Esophagus muscularis mucosa (tissue), 4 donors: ENCODE measurements at regions of chr9 and their contacts with region 1.

Region 1: GRCh38 chr9:70258692-70259511 is at the start of gene SMC5:
- DNase-seq: peak; percentile 97
- H3K4me3 ChIP-seq: peak within 1 kb of the TSS; percentile 72 to 83 (median 80)
- H3K27ac ChIP-seq: peak within 1 kb of the TSS; percentile 92 to 94 (median 92)
- H3K4me1 ChIP-seq: peaks cover 42 to 71% (median 66%) of the 10 kb centered on the region in 4 donors
- H3K27me3 ChIP-seq: no peaks in the 10 kb centered on the region
- CTCF ChIP-seq: no peak
- EP300 ChIP-seq: no peak
- POLR2A ChIP-seq: peak; percentile 96
- total RNA-seq, gene SMC5: 17.2 to 27.4 (median 17.8) TPM

Region 2: DNA sequence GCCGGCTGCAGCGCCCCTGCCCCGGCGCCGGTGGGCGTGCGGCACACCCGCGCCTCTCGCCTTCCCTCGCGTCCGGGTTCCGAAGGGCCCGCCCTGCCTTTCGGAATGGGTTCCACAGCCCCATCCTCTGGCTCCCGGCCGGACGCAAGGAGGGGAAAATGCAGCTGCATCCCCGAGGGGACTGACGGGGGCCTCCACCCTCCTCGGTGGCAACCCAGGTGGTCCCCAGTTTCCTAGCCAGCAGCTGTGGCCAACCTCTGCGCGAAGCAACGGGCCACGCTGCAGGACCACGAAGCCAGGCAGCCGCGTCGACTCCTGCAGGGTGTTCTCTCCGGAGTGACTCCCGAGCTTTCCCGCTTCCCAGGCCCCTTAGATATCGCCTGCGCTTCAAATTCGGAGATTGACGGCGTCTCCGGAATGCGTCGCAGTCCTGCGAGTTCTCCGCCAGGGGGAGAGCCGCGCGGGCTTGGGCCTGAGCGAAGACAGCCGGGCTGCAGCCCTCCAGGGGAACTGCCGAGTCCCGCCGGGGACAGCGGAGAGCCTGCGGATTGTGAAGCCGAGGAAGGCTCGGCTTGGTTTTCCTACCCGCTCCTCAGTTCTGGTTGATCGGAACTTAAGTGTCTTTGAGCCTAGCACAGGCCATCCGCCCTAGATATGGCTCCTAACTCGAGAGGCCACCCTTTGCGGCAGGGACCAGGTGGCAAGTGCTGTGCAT is 586.1 kb before region 1 on chr9:
- intact Hi-C with region 1: loop called (anchors 10 kb)
- DNase-seq: no peak
- H3K4me3 ChIP-seq: peak overlapping the region; percentile 81 to 94 (median 87)
- H3K27ac ChIP-seq: peak overlapping the region; percentile 75 to 83 (median 82)
- H3K4me1 ChIP-seq: peaks cover 15 to 24% (median 23%) of the 10 kb centered on the region in 4 donors
- H3K27me3 ChIP-seq: peaks cover 0 to 3% (median 0%) of the 10 kb centered on the region in 4 donors
- CTCF ChIP-seq: peak; percentile 71 to 91 (median 88)
- EP300 ChIP-seq: no peak
- POLR2A ChIP-seq: no peak

Region 3: GRCh38 chr9:69981686-69982450 is 277.0 kb before region 1 on chr9:
- intact Hi-C with region 1: loop called (anchors 10 kb)
- DNase-seq: no peak
- H3K4me3 ChIP-seq: no peak overlapping the region
- H3K27ac ChIP-seq: no peak overlapping the region
- H3K4me1 ChIP-seq: no peaks in the 10 kb centered on the region
- H3K27me3 ChIP-seq: no peaks in the 10 kb centered on the region
- CTCF ChIP-seq: no peak
- EP300 ChIP-seq: no peak
- POLR2A ChIP-seq: no peak

Region 4: GRCh38 chr9:70318002-70318401 is 59.1 kb after region 1 on chr9:
- intact Hi-C with region 1: loop called (anchors 10 kb)
- DNase-seq: no peak
- H3K4me3 ChIP-seq: no peak overlapping the region
- H3K27ac ChIP-seq: no peak overlapping the region
- H3K4me1 ChIP-seq: no peaks in the 10 kb centered on the region
- H3K27me3 ChIP-seq: no peaks in the 10 kb centered on the region
- CTCF ChIP-seq: no peak
- EP300 ChIP-seq: no peak
- POLR2A ChIP-seq: no peak

Region 5: GRCh38 chr9:70352802-70353201 is 93.9 kb after region 1 on chr9:
- intact Hi-C with region 1: no loop called
- DNase-seq: no peak
- H3K4me3 ChIP-seq: no peak overlapping the region
- H3K27ac ChIP-seq: peak overlapping the region in 1 of 4 donors; percentile 55
- H3K4me1 ChIP-seq: peaks cover 0 to 28% (median 21%) of the 10 kb centered on the region in 4 donors
- H3K27me3 ChIP-seq: no peaks in the 10 kb centered on the region
- CTCF ChIP-seq: peak; percentile 72 to 80 (median 79)
- EP300 ChIP-seq: no peak
- POLR2A ChIP-seq: no peak